Head of caudate nucleus (tissue), 42 donors: ENCODE measurements at regions of chr13 and their contacts with region 1.

Region 1: GRCh38 chr13:111066544-111066943 is 48.6 kb upstream of the ARHGEF7 start:
- DNase-seq: peak in 12 of 42 donors; percentile 8 to 45 (median 20)

Region 2: GRCh38 chr13:111129465-111130115 is 63.0 kb after region 1 on chr13:
- intact Hi-C with region 1: no loop called
- DNase-seq: no peak

Region 3: DNA sequence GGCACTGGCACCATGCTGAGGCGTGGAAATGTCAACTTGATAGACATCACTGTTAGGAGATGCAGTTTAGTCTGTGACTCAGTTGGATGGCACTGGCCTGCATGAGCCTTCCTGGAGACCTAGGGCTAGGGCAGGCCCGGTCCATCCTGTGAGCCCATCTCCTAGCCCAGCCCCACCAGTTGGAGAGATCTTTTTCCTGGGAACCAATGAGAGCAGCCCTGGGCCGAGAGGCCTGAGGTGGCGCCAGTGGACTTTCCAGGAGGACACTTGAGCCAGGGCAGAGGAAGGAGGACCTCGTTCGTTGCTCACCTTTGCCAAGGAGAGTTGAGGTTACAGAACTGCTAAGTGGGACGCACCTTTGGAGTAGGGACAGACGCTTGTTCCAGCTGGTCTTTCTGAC is 153.4 kb after region 1 on chr13:
- intact Hi-C with region 1: loop called (anchors 5 kb)
- DNase-seq: no peak

Region 4: GRCh38 chr13:111460548-111461444 is 394.3 kb after region 1 on chr13:
- intact Hi-C with region 1: loop called (anchors 10 kb)
- DNase-seq: peak; percentile 49 to 89 (median 72)